CD4-positive, alpha-beta T cell (primary cell): ENCODE measurements at regions of chr20 and their contacts with region 1.

Region 1: GRCh38 chr20:44388466-44389023 is 33.0 kb downstream of the HNF4A start:
- DNase-seq: peak; percentile 39 to 85 (median 56)
- ATAC-seq: peak; percentile 92
- H3K4me3 ChIP-seq: no peak overlapping the region
- H3K4me3 Mint-ChIP-seq: no peak overlapping the region
- H3K27ac ChIP-seq: no peak overlapping the region
- H3K27ac Mint-ChIP-seq: no peak overlapping the region
- H3K4me1 ChIP-seq: peaks cover 8% of the 10 kb centered on the region
- H3K4me1 Mint-ChIP-seq: peaks cover 15% of the 10 kb centered on the region
- H3K27me3 ChIP-seq: peaks cover 4% of the 10 kb centered on the region in 2 experiments
- H3K27me3 Mint-ChIP-seq: peaks cover 8% of the 10 kb centered on the region
- CTCF ChIP-seq: peak; percentile 66

Region 2: DNA sequence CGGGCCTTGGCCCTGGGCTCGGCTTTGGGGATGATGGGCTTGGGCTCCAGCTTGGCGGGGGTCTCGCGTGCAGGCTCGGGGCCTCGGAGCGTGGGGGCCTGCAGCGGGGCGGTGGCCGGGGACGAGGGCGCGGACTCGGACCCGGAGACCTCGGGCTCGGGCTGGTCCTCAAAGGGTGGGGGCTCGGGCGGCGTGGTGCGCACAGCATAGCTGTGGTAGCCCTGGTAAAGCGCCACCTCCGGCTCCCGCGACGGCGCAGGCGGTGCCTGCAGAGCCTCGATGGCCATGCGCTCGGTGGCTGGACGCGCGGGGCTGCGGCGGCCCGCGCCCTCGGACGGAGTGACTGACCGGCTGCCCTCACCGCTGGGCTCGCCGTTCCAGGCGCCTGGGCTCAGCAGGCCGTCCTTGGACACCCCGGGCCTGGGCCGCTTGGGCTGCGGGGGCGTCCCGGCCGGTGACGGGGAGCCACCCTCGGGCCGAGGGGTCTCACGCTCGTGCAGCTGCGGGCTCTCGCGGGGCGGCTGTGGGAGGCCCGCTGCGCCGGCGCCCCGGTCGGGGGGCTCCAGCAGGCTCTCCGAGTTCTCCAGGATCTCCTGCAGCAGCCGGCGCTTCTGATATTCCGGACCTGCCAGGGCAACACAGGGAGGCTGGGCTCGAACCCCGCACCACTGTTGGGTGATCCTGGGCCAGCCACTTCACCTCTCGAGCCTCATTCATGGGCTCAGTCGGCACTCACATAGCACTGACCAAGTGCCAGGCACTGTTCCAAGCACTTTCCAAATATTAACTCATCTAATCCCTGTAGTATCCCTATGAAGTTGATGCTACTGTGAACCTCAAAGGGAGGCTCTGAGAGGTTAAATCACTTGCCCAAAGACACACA is 272.5 kb before region 1 on chr20:
- CTCF ChIA-PET with region 1: no interaction called
- POLR2A ChIA-PET with region 1: no interaction called
- intact Hi-C with region 1: loop called in 1 of 2 experiments (anchors 5 kb)
- DNase-seq: no peak
- ATAC-seq: peak; percentile 21
- H3K4me3 ChIP-seq: no peak overlapping the region
- H3K4me3 Mint-ChIP-seq: no peak overlapping the region
- H3K27ac ChIP-seq: no peak overlapping the region
- H3K27ac Mint-ChIP-seq: no peak overlapping the region
- H3K4me1 ChIP-seq: peaks cover 4% of the 10 kb centered on the region
- H3K4me1 Mint-ChIP-seq: peaks cover 9% of the 10 kb centered on the region
- H3K27me3 ChIP-seq: peaks cover 19 to 20% of the 10 kb centered on the region in 2 experiments
- H3K27me3 Mint-ChIP-seq: peaks cover 53% of the 10 kb centered on the region
- CTCF ChIP-seq: no peak

Region 3: GRCh38 chr20:44866703-44867335 is 478.3 kb after region 1 on chr20:
- CTCF ChIA-PET with region 1: interaction called, 3 read pairs
- POLR2A ChIA-PET with region 1: no interaction called
- intact Hi-C with region 1: loop called (anchors 5 kb)
- DNase-seq: peak in 2 of 14 experiments; percentile 32 to 40
- ATAC-seq: no peak
- H3K4me3 ChIP-seq: no peak overlapping the region
- H3K4me3 Mint-ChIP-seq: peak overlapping the region; percentile 70
- H3K27ac ChIP-seq: no peak overlapping the region
- H3K27ac Mint-ChIP-seq: no peak overlapping the region
- H3K4me1 ChIP-seq: peaks cover 7% of the 10 kb centered on the region
- H3K4me1 Mint-ChIP-seq: peaks cover 10% of the 10 kb centered on the region
- H3K27me3 ChIP-seq: peaks cover 0 to 5% of the 10 kb centered on the region in 2 experiments
- H3K27me3 Mint-ChIP-seq: peaks cover 9% of the 10 kb centered on the region
- CTCF ChIP-seq: no peak